Esophagus squamous epithelium (tissue), 5 donors: ENCODE measurements at regions of chr3 and their contacts with region 1.

Region 1: DNA sequence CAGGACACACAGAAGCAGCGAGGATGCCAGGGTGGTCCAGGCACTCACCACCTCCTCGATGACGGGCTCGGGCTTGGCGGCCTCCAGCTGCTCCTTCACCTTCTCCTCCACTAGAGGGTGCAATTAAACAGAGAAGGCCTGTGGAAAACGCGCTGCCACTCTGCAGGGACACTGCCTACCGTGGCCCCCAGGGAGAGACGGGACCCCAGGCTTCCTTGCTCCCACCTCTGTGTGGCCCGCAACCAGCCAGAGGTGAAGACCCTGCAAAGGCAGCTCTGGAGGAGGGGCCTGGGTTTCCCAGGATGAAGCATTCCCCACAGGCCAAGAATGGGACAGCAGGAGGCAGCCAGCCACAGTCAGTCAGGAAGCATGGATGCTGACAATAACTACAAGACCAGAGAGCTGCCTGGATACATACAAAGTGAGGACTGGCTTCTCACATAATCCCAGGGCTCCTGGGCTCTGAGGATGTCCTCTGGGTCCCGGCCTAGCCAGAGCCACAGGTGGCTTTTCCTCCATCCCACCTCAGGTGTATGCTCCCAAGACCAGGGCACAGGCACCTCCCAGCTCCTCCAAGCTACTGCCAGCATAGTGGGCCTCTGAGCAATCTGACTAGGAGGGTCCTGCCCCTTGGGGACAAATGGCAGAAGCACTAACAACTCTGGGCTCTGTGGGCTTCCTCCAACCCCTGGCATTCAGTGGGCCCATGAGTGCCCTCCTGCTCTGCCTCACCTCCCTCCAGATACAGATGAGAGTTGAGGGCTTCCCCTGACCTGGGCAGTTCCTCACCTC is 46.2 kb downstream of the PTH1R start:
- DNase-seq: no peak
- H3K4me3 ChIP-seq: no peak overlapping the region
- H3K27ac ChIP-seq: peak overlapping the region in 3 of 4 donors; percentile 86 to 94 (median 87)
- H3K4me1 ChIP-seq: peaks cover 22 to 55% (median 39%) of the 10 kb centered on the region in 3 donors
- H3K27me3 ChIP-seq: no peaks in the 10 kb centered on the region
- CTCF ChIP-seq: peak; percentile 51 to 87 (median 73)
- POLR2A ChIP-seq: no peak

Region 2: GRCh38 chr3:46998121-46998851 is 74.5 kb after region 1 on chr3:
- intact Hi-C with region 1: loop called (anchors 5 kb)
- DNase-seq: no peak
- H3K4me3 ChIP-seq: no peak overlapping the region
- H3K27ac ChIP-seq: peak overlapping the region in 3 of 4 donors; percentile 6 to 68 (median 62)
- H3K4me1 ChIP-seq: peaks cover 0 to 47% (median 16%) of the 10 kb centered on the region in 3 donors
- H3K27me3 ChIP-seq: no peaks in the 10 kb centered on the region
- CTCF ChIP-seq: peak; percentile 73 to 95 (median 90)
- POLR2A ChIP-seq: no peak